ENCODE measurements at regions of chr18 and their contacts with region 1.

Region 1: GRCh38 chr18:2571200-2572143 is at the starts of genes METTL4 and NDC80:
- DNase-seq: peak; percentile 77 to 90 (median 84)
- H3K4me3 ChIP-seq: peak within 1 kb of the TSS; percentile 41 to 88 (median 57)
- H3K27ac ChIP-seq: peak within 1 kb of the TSS; percentile 91 to 99 (median 95)
- H3K4me1 ChIP-seq: peaks cover 11% of the 10 kb centered on the region in 2 donors
- H3K27me3 ChIP-seq: no peaks in the 10 kb centered on the region
- CTCF ChIP-seq: no peak
- POLR2A ChIP-seq: peak in 1 of 2 donors; percentile 32
- total RNA-seq, gene METTL4: 1.3 to 8.7 (median 5.7) TPM
- total RNA-seq, gene NDC80: 0.35 to 15.4 (median 0.81) TPM in 8 of 9 donors, not detected in the other

Region 2: GRCh38 chr18:2191151-2191760 is 380.2 kb before region 1 on chr18:
- intact Hi-C with region 1: no loop called
- DNase-seq: no peak
- H3K4me3 ChIP-seq: no peak overlapping the region
- H3K27ac ChIP-seq: no peak overlapping the region
- H3K4me1 ChIP-seq: no peaks in the 10 kb centered on the region
- H3K27me3 ChIP-seq: no peaks in the 10 kb centered on the region
- CTCF ChIP-seq: no peak
- POLR2A ChIP-seq: no peak

Region 3: GRCh38 chr18:2522112-2522511 is 49.4 kb before region 1 on chr18:
- intact Hi-C with region 1: no loop called
- DNase-seq: no peak
- H3K4me3 ChIP-seq: no peak overlapping the region
- H3K27ac ChIP-seq: no peak overlapping the region
- H3K4me1 ChIP-seq: no peaks in the 10 kb centered on the region
- H3K27me3 ChIP-seq: no peaks in the 10 kb centered on the region
- CTCF ChIP-seq: no peak
- POLR2A ChIP-seq: no peak

Region 4: GRCh38 chr18:2559249-2559648 is 12.2 kb before region 1 on chr18:
- intact Hi-C with region 1: no loop called
- DNase-seq: no peak
- H3K4me3 ChIP-seq: no peak overlapping the region
- H3K27ac ChIP-seq: no peak overlapping the region
- H3K4me1 ChIP-seq: no peaks in the 10 kb centered on the region
- H3K27me3 ChIP-seq: no peaks in the 10 kb centered on the region
- CTCF ChIP-seq: no peak
- POLR2A ChIP-seq: no peak

Region 5: DNA sequence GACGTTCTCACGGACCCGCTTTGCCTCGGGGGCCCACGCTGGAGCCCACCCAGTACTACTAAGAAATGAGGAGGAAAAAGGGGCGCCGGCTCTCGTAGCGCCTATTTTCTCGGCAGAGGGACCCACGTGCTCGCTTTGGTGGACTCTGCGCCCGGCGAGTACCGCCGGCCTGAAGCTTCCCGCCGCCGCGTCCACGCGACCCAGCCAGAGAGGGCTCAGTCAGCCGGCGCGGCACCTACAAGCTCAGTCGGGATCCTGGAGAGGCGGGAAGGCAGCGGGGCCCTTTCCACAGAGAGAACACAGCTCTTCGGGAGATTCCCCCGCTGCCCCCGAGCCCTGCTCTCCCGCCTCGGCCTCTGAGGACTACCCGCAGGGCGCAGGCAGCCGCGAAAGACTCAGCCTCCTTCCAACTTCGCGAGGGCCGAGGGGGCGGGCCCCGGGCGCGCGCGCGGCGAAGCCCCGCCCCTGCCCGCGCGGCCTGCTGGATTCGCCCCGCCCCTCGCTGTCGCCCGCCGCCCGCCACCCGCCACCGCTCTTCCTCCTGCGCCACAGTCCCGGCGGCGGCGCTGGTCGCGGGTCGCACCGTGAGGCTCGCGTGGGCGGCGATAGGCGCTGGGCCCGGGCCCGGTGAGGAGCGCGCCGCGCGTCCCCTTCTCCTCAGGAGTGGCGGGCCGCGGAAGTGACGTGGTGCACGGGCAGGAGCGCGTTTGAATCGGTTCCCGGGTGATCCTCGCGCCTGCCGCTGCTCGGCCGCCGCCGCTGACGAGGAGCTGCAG is 83.9 kb after region 1 on chr18 and contains the start of gene SMCHD1:
- intact Hi-C with region 1: loop called in 1 of 2 experiments (anchors 10 kb)
- DNase-seq: peak; percentile 86 to 91 (median 89)
- H3K4me3 ChIP-seq: peak within 1 kb of the TSS; percentile 67 to 99 (median 90)
- H3K27ac ChIP-seq: peak within 1 kb of the TSS; percentile 94 to 98 (median 96)
- H3K4me1 ChIP-seq: peaks cover 17 to 40% of the 10 kb centered on the region in 2 donors
- H3K27me3 ChIP-seq: no peaks in the 10 kb centered on the region
- CTCF ChIP-seq: no peak
- POLR2A ChIP-seq: peak; percentile 87 to 92
- total RNA-seq, gene SMCHD1: 13.3 to 77.1 (median 26.7) TPM

Measured in adrenal gland (tissue), 19 donors.